Panc1 (cell line): ENCODE measurements at regions of chrX and their contacts with region 1.

Region 1: GRCh38 chrX:131728295-131729145 is 184.6 kb downstream of the OR13H1 start:
- DNase-seq: peak; percentile 77
- ATAC-seq: peak; percentile 96
- H3K4me3 ChIP-seq: peak overlapping the region; percentile 37 to 56
- H3K27ac ChIP-seq: peak overlapping the region; percentile 98
- H3K4me1 ChIP-seq: peaks cover 3% of the 10 kb centered on the region
- H3K27me3 ChIP-seq: no peaks in the 10 kb centered on the region
- CTCF ChIP-seq: peak; percentile 56

Region 2: GRCh38 chrX:131671735-131672134 is 56.8 kb before region 1 on chrX:
- CTCF ChIA-PET with region 1: no interaction called
- POLR2A ChIA-PET with region 1: no interaction called
- in situ Hi-C with region 1: no loop called
- intact Hi-C with region 1: no loop called
- DNase-seq: no peak
- ATAC-seq: no peak
- H3K4me3 ChIP-seq: no peak overlapping the region
- H3K27ac ChIP-seq: no peak overlapping the region
- H3K4me1 ChIP-seq: no peaks in the 10 kb centered on the region
- H3K27me3 ChIP-seq: no peaks in the 10 kb centered on the region
- CTCF ChIP-seq: no peak

Region 3: GRCh38 chrX:131710431-131711045 is 18.0 kb before region 1 on chrX:
- CTCF ChIA-PET with region 1: no interaction called
- POLR2A ChIA-PET with region 1: no interaction called
- in situ Hi-C with region 1: no loop called
- intact Hi-C with region 1: loop called (anchors 2 kb)
- DNase-seq: no peak
- ATAC-seq: peak; percentile 63
- H3K4me3 ChIP-seq: peak overlapping the region in 1 of 2 experiments; percentile 64; a peak in 3 of 4 replicates
- H3K27ac ChIP-seq: peak overlapping the region; percentile 81; the same call in 1 of the 2 replicates
- H3K4me1 ChIP-seq: peaks cover 9% of the 10 kb centered on the region; the same call in 1 of the 2 replicates
- H3K27me3 ChIP-seq: no peaks in the 10 kb centered on the region
- CTCF ChIP-seq: no peak

Region 4: DNA sequence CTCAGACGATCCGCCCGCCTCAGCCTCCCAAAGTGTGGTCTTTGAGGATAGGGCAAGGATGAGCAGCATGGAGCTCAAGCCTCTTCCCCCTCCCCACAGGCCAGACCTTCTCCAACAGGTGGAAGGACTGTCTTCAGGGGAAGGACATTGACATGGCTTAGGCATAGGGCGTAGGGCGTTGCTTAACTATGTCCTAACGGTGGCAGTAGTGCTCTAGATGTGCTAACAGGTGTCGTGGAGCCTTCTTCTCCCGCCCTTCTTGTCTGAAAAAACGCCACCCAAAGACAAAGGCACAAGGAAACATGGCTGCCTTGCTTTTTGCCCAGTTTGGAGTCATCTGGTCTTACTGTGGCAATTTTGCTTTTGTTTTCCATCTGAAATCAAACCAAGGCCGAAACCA is 35.2 kb after region 1 on chrX:
- CTCF ChIA-PET with region 1: no interaction called
- POLR2A ChIA-PET with region 1: no interaction called
- in situ Hi-C with region 1: no loop called
- intact Hi-C with region 1: no loop called
- DNase-seq: peak; percentile 87
- ATAC-seq: peak; percentile 93
- H3K4me3 ChIP-seq: peak overlapping the region; percentile 24 to 60
- H3K27ac ChIP-seq: peak overlapping the region; percentile 84
- H3K4me1 ChIP-seq: peaks cover 10% of the 10 kb centered on the region
- H3K27me3 ChIP-seq: no peaks in the 10 kb centered on the region
- CTCF ChIP-seq: peak; percentile 76

Region 5: DNA sequence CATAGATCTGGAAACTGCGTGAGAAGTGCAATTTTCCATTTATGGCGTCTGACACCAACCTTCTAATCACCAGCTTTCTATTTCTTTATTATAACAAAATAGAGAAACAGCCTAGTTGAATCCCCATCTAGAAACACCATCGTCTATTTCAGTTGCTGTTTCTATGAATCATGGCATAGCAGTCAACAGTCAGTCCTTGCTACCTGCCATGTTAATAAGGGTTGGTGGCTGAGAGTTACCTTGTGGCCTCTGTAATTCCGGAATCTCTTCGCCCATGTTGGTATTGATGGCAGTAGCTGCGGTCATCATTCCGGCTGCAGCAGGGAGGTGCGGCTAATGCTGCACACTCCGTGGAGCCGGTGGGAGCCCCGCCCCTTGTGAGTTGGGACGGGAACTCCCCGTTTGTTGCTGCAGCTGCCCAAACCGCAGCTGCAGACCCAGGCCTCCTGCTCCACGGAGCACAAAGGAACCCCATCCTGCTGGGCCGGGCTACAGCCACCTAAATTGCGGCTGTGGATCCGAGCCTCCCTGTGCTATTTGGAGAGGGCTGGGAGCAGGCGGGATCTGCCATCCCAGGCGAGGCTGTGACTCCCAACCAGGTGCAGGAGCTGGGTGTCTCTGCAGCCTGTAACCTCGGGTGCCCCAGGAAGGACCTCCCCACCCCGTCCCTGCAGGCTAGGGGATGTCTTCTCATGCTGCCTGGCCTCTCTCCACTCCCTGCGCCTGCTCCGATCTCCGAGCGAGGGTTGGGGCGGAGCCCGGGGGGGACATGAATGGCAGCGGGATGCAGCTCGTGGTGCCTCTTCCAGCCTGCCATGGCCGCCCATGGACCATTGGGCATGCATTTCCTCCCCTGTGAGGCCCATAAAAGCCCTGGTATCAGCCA is 179.2 kb after region 1 on chrX:
- CTCF ChIA-PET with region 1: no interaction called
- POLR2A ChIA-PET with region 1: no interaction called
- in situ Hi-C with region 1: no loop called
- intact Hi-C with region 1: no loop called
- DNase-seq: no peak
- ATAC-seq: no peak
- H3K4me3 ChIP-seq: no peak overlapping the region
- H3K27ac ChIP-seq: no peak overlapping the region
- H3K4me1 ChIP-seq: no peaks in the 10 kb centered on the region
- H3K27me3 ChIP-seq: peaks cover 2% of the 10 kb centered on the region
- CTCF ChIP-seq: no peak